ENCODE measurements at regions of chr14 and their contacts with region 1.

Region 1: DNA sequence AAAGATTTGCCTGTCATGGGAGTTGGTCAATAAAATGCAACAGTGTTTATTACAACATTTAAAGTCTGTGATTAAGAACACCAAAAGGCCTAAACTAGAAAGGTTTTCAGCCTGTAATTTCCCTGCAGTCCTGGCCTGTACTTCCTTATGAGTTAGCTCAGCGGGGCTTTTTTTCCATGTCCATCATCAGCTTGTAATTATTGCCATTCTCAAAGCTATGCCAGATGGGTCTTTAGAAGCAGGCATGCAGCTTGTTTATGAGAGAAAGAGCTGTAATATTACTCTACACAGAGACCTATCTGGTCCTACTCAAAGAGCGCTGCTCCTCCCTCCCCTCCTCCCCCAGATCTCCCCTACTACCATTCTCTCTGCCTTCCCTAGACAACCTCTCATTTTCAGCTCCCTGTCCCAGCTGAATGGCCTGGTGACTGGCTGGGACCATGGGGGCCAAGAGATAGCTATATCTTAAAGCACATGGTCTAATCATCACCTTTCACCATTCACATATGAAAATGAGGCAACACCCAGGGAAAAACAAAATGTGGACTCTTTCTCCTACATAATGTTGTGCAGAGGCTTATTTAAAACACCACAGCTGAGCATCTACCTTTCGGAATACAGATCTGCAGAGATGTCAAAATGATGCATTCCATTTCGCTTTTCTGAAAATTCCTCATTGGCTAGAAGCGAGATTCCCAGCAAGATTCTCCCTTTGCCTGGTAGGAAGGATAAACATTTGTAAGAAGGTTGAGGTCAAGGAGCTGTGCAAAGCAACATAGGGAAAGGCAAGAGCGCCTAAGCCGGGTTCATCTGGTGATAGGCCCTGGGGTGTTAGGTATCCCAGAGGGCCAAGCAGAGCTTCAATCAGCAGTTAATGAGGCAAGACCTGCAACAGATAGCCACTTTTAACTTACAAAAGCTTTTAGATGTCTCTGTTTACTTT is 209.7 kb upstream of the CDKN3 start:
- DNase-seq: no peak
- H3K4me3 ChIP-seq: no peak overlapping the region
- H3K27ac ChIP-seq: no peak overlapping the region
- H3K4me1 ChIP-seq: peaks cover 3 to 13% (median 7%) of the 10 kb centered on the region in 4 experiments
- H3K27me3 ChIP-seq: peaks cover 0 to 2% (median 0%) of the 10 kb centered on the region in 5 experiments

Region 2: DNA sequence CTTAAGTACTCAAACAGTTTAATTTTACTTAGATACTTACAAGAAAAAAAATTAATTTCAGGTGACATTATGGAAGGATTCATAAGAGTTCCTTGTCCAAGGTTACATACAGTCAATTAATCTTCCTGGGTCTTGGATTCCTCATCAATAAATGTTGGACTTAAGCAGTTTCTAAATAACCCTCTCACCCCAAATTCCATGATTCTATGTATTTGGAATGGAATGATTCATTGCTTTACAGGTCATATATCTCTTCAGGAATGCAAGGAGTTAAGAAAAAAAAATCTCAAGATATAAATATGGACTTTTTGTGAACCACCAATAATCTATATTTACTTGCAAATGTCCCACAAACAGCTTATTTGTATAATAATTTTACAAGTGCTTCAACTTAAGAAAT is 146.2 kb before region 1 on chr14:
- CTCF ChIA-PET with region 1: no interaction called
- POLR2A ChIA-PET with region 1: no interaction called
- DNase-seq: no peak
- H3K4me3 ChIP-seq: no peak overlapping the region
- H3K27ac ChIP-seq: no peak overlapping the region
- H3K4me1 ChIP-seq: no peaks in the 10 kb centered on the region
- H3K27me3 ChIP-seq: peaks cover 0 to 2% (median 0%) of the 10 kb centered on the region in 5 experiments

Region 3: GRCh38 chr14:54127526-54127925 is 59.6 kb before region 1 on chr14:
- CTCF ChIA-PET with region 1: no interaction called
- POLR2A ChIA-PET with region 1: no interaction called
- DNase-seq: no peak
- H3K4me3 ChIP-seq: no peak overlapping the region
- H3K27ac ChIP-seq: no peak overlapping the region
- H3K4me1 ChIP-seq: no peaks in the 10 kb centered on the region
- H3K27me3 ChIP-seq: peaks cover 0 to 2% (median 0%) of the 10 kb centered on the region in 5 experiments

Region 4: DNA sequence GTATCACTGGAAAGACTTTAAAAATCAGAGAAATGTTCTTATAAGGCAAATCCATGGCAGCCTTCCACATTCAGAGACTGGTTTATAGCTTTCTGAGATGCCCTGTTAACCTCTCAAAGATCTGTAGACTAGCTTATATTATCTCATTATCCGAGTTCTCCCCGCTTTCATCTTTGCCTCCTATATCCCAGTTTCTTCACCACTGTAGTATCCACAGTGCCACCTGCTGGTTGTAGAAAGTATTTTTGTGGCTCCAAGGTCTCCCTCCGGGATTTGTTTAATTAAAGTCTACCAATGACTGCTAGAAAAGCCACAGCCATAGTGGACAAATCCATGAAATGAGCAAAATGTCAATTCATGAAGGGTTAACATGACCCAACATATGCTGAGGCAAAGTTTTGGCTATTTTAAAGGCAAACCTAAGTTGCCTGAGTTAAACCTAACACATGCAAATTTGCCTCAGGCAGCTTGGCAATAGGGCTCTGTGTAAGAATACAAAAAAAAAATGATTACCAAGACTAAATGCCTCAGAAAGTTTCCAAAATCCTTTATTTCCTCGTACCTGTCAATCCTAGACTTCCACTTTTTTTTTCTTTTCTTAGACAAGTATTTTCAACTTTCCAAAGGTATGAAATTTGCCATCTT is 11.7 kb before region 1 on chr14:
- CTCF ChIA-PET with region 1: interaction called, 12 read pairs
- POLR2A ChIA-PET with region 1: no interaction called
- DNase-seq: peak; percentile 61 to 75 (median 61)
- H3K4me3 ChIP-seq: no peak overlapping the region
- H3K27ac ChIP-seq: no peak overlapping the region
- H3K4me1 ChIP-seq: peaks cover 0 to 17% (median 7%) of the 10 kb centered on the region in 4 experiments
- H3K27me3 ChIP-seq: peaks cover 0 to 27% (median 6%) of the 10 kb centered on the region in 5 experiments

Region 5: DNA sequence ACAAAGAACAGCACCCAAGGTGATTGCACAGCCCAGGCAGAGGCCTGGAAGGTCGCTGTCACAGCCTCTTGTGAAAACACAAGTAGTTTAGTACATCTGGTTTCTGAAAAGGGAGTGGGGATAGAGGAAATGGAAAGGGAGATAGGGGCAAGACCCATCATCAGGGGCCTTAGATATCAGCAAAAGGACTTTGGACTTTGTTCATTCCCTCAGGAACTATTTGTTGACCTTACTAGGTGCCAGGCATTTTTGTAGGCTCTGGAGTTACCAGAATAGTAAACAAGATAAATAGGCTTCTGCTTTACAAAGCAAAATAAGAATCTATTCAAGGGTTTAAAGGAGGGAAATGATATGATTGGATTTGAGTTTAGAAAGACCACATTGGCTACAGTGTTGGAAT is 10.3 kb after region 1 on chr14:
- CTCF ChIA-PET with region 1: no interaction called
- POLR2A ChIA-PET with region 1: no interaction called
- DNase-seq: no peak
- H3K4me3 ChIP-seq: no peak overlapping the region
- H3K27ac ChIP-seq: no peak overlapping the region
- H3K4me1 ChIP-seq: no peaks in the 10 kb centered on the region
- H3K27me3 ChIP-seq: no peaks in the 10 kb centered on the region